A673 (cell line): ENCODE measurements at regions of chr6 and their contacts with region 1.

Region 1: DNA sequence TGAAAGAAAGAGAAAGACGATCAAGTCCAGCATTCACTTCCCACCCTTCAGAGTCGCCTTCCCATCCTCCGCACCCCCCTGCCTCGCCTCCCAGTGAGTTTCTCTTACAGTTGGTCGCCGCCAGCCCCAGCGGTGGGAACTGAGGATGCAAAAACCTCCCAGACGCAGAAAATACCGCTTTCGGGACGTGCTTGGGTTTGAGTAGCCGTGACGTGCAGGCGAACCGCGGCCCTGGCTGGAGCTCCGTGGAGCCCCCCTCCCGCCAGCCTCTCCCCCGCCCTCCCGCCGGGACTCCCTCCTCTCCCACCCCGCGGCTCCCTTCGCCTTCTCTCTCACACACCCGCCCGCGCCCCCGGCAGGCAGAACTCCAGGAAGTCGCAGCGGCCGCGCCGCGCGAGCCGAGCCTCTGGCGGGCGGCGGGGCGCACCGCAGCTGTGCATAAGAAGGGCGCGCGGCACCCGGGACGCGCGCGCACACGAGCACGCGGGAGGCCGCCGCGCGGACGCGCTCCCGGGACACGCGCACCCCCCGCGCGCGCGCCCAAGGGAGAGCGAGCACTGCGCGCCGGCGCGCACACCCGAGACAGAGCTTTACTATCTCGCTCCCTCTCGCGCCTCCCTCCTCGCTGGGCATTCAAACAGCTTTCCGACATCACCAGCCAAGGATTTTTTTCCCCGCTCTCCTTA is at the start of gene ADGRB3:
- DNase-seq: peak; percentile 95
- H3K4me3 ChIP-seq: peak within 1 kb of the TSS; percentile 88
- H3K27ac ChIP-seq: peak within 1 kb of the TSS; percentile 84
- H3K4me1 ChIP-seq: peaks cover 39% of the 10 kb centered on the region
- H3K27me3 ChIP-seq: no peaks in the 10 kb centered on the region
- CTCF ChIP-seq: no peak
- total RNA-seq, gene ADGRB3: 7.7 and 8.1 TPM in 2 replicates

Region 2: DNA sequence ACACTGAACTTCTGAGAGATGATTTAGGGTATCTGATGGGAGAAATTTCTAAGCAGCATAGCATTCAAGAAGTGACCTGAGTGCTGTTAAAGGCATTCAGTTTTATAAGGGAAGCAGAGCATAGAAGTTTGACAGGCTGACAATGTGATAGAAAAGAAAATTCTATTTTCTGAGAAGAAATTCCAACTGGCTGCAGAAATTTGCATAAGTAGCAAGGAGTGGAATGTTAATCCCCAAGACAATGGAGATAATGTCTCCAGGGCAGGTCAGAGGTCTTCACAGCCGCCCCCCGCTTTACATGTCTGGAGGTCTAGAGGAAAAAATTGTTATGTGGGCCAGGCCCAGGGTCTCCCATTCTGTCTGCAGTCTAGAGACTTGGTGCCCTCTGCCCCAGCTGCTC is 1566.1 kb before region 1 on chr6:
- CTCF ChIA-PET with region 1: no interaction called
- POLR2A ChIA-PET with region 1: no interaction called
- intact Hi-C with region 1: loop called (anchors 10 kb)
- DNase-seq: no peak
- H3K4me3 ChIP-seq: no peak overlapping the region
- H3K27ac ChIP-seq: no peak overlapping the region
- H3K4me1 ChIP-seq: no peaks in the 10 kb centered on the region
- H3K27me3 ChIP-seq: no peaks in the 10 kb centered on the region
- CTCF ChIP-seq: no peak

Region 3: DNA sequence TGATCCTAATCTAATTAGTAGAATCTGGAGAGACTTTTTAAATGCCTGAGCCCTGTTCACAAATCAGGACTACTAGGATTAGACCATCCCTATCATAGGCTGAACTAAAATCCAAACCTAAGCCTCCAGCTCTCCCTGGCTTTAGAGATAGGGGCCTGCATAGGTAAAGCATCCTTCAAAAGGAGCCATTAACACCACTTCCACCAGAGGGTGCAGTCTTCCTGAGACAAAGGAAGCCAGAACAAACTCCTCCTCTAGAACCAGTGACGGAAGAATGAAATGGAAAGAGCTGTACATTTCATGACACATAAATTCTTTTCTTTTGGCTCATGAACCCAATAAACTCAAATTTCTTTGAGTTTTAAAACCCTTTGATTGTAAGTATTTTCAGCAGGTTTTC is 291.0 kb before region 1 on chr6:
- CTCF ChIA-PET with region 1: interaction called, 9 read pairs
- POLR2A ChIA-PET with region 1: no interaction called
- intact Hi-C with region 1: loop called (anchors 1 kb)
- DNase-seq: peak; percentile 80
- H3K4me3 ChIP-seq: no peak overlapping the region
- H3K27ac ChIP-seq: no peak overlapping the region
- H3K4me1 ChIP-seq: no peaks in the 10 kb centered on the region
- H3K27me3 ChIP-seq: no peaks in the 10 kb centered on the region
- CTCF ChIP-seq: peak; percentile 79

Region 4: DNA sequence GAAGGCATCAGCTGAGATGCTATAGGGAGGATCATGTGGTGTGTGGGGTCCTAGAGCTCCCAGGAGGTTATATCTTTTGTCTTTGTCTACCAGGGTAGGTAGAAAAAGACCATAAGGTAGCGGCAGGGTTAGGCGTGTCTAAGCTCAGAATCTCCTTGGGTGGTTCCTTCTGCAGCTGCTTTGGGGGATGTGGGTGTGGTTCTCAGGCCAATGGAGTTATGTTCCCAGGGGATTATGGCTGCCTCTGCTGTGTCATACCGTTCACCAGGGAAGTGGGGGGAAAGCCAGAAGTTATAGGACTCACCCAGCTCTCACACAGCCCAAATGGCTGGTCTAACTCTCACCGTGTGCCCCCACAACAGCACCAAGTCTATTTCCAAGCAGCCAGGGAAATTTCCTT is 107.2 kb before region 1 on chr6:
- CTCF ChIA-PET with region 1: no interaction called
- POLR2A ChIA-PET with region 1: no interaction called
- intact Hi-C with region 1: no loop called
- DNase-seq: peak; percentile 3
- H3K4me3 ChIP-seq: no peak overlapping the region
- H3K27ac ChIP-seq: no peak overlapping the region
- H3K4me1 ChIP-seq: no peaks in the 10 kb centered on the region
- H3K27me3 ChIP-seq: no peaks in the 10 kb centered on the region
- CTCF ChIP-seq: no peak

Region 5: DNA sequence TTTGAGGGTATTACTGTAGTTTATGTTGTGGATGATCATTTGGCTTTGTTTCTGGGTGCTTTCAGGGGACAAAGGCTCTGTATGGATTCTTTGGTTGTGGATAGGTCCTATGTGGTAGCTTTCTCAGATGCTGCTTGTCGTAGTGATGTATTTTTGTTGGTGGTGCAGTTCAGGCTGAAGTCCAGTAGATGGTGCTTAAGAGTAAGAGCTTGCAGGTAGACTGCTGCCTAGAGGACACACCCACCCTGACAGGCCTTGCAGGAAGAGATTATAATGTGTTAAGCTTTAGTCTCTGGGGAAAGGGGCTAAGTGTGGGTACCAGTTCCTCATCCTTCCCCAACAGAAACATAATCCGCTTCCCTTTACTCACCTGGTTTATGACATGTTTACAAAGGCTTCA is 62.3 kb before region 1 on chr6:
- CTCF ChIA-PET with region 1: interaction called, 10 read pairs
- POLR2A ChIA-PET with region 1: no interaction called
- intact Hi-C with region 1: loop called (anchors 2 kb)
- DNase-seq: peak; percentile 87
- H3K4me3 ChIP-seq: no peak overlapping the region
- H3K27ac ChIP-seq: no peak overlapping the region
- H3K4me1 ChIP-seq: no peaks in the 10 kb centered on the region
- H3K27me3 ChIP-seq: no peaks in the 10 kb centered on the region
- CTCF ChIP-seq: peak; percentile 72

Region 6: DNA sequence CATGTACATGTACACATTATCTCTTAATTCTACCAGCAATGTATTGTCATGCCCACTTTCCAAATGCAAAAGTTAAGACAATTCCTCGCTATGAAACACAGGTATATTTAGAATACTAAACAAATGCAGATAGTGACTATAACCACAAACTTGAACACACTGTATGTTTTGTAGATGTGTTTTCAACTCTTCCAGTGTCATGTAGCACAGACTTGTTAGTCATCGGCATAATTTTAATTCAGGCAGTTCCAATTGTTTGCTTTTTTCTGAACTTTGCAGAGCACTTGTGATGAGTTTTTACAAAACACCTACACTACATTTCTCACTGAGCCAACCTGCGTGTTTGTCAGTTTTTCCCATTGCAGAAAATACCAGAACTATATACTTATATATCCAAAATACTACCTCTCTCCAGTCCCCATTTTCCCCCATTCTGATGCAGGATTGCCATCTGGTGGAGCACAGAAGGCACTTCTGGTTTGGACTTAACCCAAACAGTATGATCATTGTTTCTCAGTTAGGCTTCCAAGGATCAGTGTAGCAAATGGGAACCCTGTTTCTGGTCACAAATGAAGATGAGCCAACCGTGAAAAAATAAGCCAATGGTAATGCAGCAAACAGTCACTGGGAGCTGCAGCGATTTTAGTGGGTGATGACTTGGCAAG is 143.6 kb after region 1 on chr6:
- CTCF ChIA-PET with region 1: interaction called, 3 read pairs
- POLR2A ChIA-PET with region 1: interaction called, 3 read pairs
- intact Hi-C with region 1: loop called (anchors 1 kb)
- DNase-seq: peak; percentile 87
- H3K4me3 ChIP-seq: no peak overlapping the region
- H3K27ac ChIP-seq: no peak overlapping the region
- H3K4me1 ChIP-seq: peaks cover 41% of the 10 kb centered on the region
- H3K27me3 ChIP-seq: no peaks in the 10 kb centered on the region
- CTCF ChIP-seq: peak; percentile 90

Region 7: GRCh38 chr6:68967549-68968300 is 332.9 kb after region 1 on chr6:
- CTCF ChIA-PET with region 1: no interaction called
- POLR2A ChIA-PET with region 1: no interaction called
- intact Hi-C with region 1: loop called (anchors 2 kb)
- DNase-seq: peak; percentile 84
- H3K4me3 ChIP-seq: no peak overlapping the region
- H3K27ac ChIP-seq: no peak overlapping the region
- H3K4me1 ChIP-seq: peaks cover 12% of the 10 kb centered on the region
- H3K27me3 ChIP-seq: no peaks in the 10 kb centered on the region
- CTCF ChIP-seq: peak; percentile 90

Region 8: GRCh38 chr6:70107852-70108629 is 1473.2 kb after region 1 on chr6:
- CTCF ChIA-PET with region 1: no interaction called
- POLR2A ChIA-PET with region 1: no interaction called
- intact Hi-C with region 1: loop called (anchors 5 kb)
- DNase-seq: peak; percentile 72
- H3K4me3 ChIP-seq: no peak overlapping the region
- H3K27ac ChIP-seq: no peak overlapping the region
- H3K4me1 ChIP-seq: peaks cover 9% of the 10 kb centered on the region
- H3K27me3 ChIP-seq: no peaks in the 10 kb centered on the region
- CTCF ChIP-seq: peak; percentile 81